B cell (primary cell): ENCODE measurements at regions of chr12 and their contacts with region 1.

Region 1: GRCh38 chr12:69359531-69360347 is at the start of gene YEATS4:
- DNase-seq: peak; percentile 93
- ATAC-seq: peak; percentile 83
- H3K4me3 ChIP-seq: peak within 1 kb of the TSS; percentile 61 to 99 (median 90)
- H3K4me3 Mint-ChIP-seq: peak within 1 kb of the TSS; percentile 88
- H3K27ac ChIP-seq: peak within 1 kb of the TSS; percentile 93 to 96
- H3K27ac Mint-ChIP-seq: peak within 1 kb of the TSS; percentile 95
- H3K4me1 ChIP-seq: peaks cover 10 to 21% of the 10 kb centered on the region in 2 donors
- H3K4me1 Mint-ChIP-seq: peaks cover 17% of the 10 kb centered on the region
- H3K27me3 ChIP-seq: no peaks in the 10 kb centered on the region
- H3K27me3 Mint-ChIP-seq: no peaks in the 10 kb centered on the region
- CTCF ChIP-seq: no peak
- total RNA-seq, gene YEATS4: 15.2 and 18.0 TPM in 2 replicates

Region 2: GRCh38 chr12:69239352-69239921 is 120.3 kb before region 1 on chr12 and contains the start of gene CPSF6:
- CTCF ChIA-PET with region 1: interaction called, 3 read pairs
- POLR2A ChIA-PET with region 1: no interaction called
- intact Hi-C with region 1: loop called (anchors 1 kb)
- DNase-seq: peak; percentile 97
- ATAC-seq: peak; percentile 94
- H3K4me3 ChIP-seq: peak within 1 kb of the TSS; percentile 63 to 91 (median 88)
- H3K4me3 Mint-ChIP-seq: peak within 1 kb of the TSS; percentile 93
- H3K27ac ChIP-seq: peak within 1 kb of the TSS; percentile 80 to 88
- H3K27ac Mint-ChIP-seq: peak within 1 kb of the TSS; percentile 98
- H3K4me1 ChIP-seq: peaks cover 33 to 39% of the 10 kb centered on the region in 2 donors
- H3K4me1 Mint-ChIP-seq: peaks cover 48% of the 10 kb centered on the region
- H3K27me3 ChIP-seq: no peaks in the 10 kb centered on the region
- H3K27me3 Mint-ChIP-seq: no peaks in the 10 kb centered on the region
- CTCF ChIP-seq: no peak
- total RNA-seq, gene CPSF6: 108 and 114 TPM in 2 replicates

Region 3: GRCh38 chr12:69330475-69331473 is 29.0 kb before region 1 on chr12:
- CTCF ChIA-PET with region 1: interaction called, 21 read pairs
- POLR2A ChIA-PET with region 1: interaction called, 14 read pairs
- intact Hi-C with region 1: loop called (anchors 2 kb)
- DNase-seq: peak; percentile 62
- ATAC-seq: peak; percentile 77
- H3K4me3 ChIP-seq: peak overlapping the region; percentile 46 to 74 (median 65)
- H3K4me3 Mint-ChIP-seq: peak overlapping the region; percentile 91
- H3K27ac ChIP-seq: peak overlapping the region; percentile 83 to 86
- H3K27ac Mint-ChIP-seq: peak overlapping the region; percentile 93
- H3K4me1 ChIP-seq: peaks cover 15 to 20% of the 10 kb centered on the region in 2 donors
- H3K4me1 Mint-ChIP-seq: peaks cover 23% of the 10 kb centered on the region
- H3K27me3 ChIP-seq: no peaks in the 10 kb centered on the region
- H3K27me3 Mint-ChIP-seq: no peaks in the 10 kb centered on the region
- CTCF ChIP-seq: no peak

Region 4: GRCh38 chr12:69348162-69348938 is 11.4 kb before region 1 on chr12 and contains the start of gene LYZ:
- CTCF ChIA-PET with region 1: interaction called, 31 read pairs
- POLR2A ChIA-PET with region 1: interaction called, 4 read pairs
- intact Hi-C with region 1: no loop called
- DNase-seq: peak; percentile 17
- ATAC-seq: no peak
- H3K4me3 ChIP-seq: peak within 1 kb of the TSS in 1 of 5 experiments; percentile 55
- H3K4me3 Mint-ChIP-seq: no peak within 1 kb of the TSS
- H3K27ac ChIP-seq: no peak within 1 kb of the TSS
- H3K27ac Mint-ChIP-seq: peak within 1 kb of the TSS; percentile 27
- H3K4me1 ChIP-seq: peaks cover 6 to 8% of the 10 kb centered on the region in 2 donors
- H3K4me1 Mint-ChIP-seq: peaks cover 6% of the 10 kb centered on the region
- H3K27me3 ChIP-seq: peaks cover 0 to 7% (median 0%) of the 10 kb centered on the region in 4 experiments
- H3K27me3 Mint-ChIP-seq: no peaks in the 10 kb centered on the region
- CTCF ChIP-seq: no peak
- total RNA-seq, gene LYZ: 5.5 and 8.5 TPM in 2 replicates

Region 5: DNA sequence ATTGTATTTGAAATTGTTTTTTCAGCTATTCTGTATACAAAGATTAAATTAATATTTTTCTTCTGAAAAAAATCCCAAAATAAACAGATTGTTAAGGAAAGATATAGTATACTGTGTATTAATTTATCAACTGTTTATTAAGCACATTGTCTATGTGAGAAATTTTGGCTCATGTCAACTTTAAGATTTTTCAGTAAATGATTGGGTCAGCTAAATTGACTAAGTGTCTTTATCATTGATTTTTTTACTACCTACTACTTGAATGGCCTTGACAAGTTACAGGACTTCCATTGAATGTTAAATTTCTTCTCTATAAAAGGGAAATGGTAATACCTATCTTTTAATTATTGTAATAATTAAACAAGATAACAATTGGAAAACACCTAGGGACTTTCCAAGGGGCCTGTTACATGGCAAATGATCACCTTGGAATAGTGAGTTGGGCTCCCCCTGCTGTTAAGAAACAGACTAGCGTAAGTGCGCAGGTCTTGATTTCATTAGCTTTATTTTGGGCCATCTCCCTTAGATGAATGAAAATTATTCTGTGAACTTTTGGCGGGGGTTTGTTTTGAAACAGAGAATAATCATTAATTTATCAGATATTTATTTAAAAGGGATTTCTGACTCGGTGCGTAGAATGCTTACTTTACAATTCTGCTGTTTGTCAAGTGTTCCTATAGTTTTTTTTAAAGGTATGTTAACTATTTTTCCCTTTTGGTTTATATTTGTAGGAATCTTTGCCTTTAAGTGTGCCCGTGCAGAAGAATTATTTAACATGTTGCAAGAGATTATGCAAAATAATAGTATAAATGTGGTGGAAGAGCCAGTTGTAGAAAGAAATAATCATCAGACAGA is 211.0 kb after region 1 on chr12:
- CTCF ChIA-PET with region 1: interaction called, 172 read pairs
- POLR2A ChIA-PET with region 1: interaction called, 6 read pairs
- intact Hi-C with region 1: loop called (anchors 1 kb)
- DNase-seq: peak; percentile 81
- ATAC-seq: peak; percentile 63
- H3K4me3 ChIP-seq: no peak overlapping the region
- H3K4me3 Mint-ChIP-seq: no peak overlapping the region
- H3K27ac ChIP-seq: peak overlapping the region in 1 of 2 donors; percentile 82
- H3K27ac Mint-ChIP-seq: no peak overlapping the region
- H3K4me1 ChIP-seq: no peaks in the 10 kb centered on the region
- H3K4me1 Mint-ChIP-seq: peaks cover 2% of the 10 kb centered on the region
- H3K27me3 ChIP-seq: no peaks in the 10 kb centered on the region
- H3K27me3 Mint-ChIP-seq: no peaks in the 10 kb centered on the region
- CTCF ChIP-seq: peak; percentile 94

Region 6: GRCh38 chr12:69639400-69640016 is 279.8 kb after region 1 on chr12:
- CTCF ChIA-PET with region 1: interaction called, 56 read pairs
- POLR2A ChIA-PET with region 1: no interaction called
- intact Hi-C with region 1: loop called (anchors 1 kb)
- DNase-seq: peak; percentile 69
- ATAC-seq: peak; percentile 67
- H3K4me3 ChIP-seq: no peak overlapping the region
- H3K4me3 Mint-ChIP-seq: no peak overlapping the region
- H3K27ac ChIP-seq: no peak overlapping the region
- H3K27ac Mint-ChIP-seq: no peak overlapping the region
- H3K4me1 ChIP-seq: no peaks in the 10 kb centered on the region
- H3K4me1 Mint-ChIP-seq: no peaks in the 10 kb centered on the region
- H3K27me3 ChIP-seq: no peaks in the 10 kb centered on the region
- H3K27me3 Mint-ChIP-seq: no peaks in the 10 kb centered on the region
- CTCF ChIP-seq: peak; percentile 91

Region 7: DNA sequence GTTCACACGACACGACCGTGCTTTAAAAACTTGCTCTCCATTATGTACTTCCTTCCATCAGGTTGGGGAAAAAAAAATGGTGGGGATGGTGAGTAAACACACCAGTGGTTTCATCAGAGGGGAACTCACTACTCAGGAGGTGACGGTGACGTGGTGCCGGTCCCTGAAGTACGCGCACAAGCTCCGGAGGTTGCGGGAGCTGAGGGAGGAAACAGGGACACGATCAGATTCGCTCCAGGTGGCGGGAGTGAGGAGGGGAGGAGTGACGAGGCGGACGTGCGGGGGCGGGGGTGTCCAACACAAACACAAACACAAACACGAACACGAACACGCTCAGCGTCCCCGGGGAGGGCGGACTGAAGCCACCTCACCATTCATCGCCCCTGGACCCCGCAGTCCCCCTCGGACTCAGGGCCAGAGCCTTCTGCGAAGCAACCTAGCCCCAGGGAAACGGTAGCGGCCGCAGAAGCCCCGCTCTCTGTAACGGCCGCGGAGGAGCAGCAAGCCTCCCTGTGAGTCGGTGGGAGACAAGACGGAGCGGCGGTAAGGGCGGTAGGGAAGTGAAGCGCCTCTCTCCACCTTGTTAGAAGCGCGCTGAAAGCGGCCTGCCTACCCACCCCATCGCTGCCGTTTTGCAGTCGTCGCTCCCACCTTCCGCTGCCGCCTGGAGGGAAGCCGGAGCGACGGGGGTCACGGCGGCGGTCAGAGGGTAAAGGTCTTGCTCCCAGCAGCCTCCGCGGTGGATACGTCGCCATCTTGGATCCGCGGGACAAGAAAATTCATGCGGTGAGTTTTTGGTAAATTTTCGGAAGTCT is 883.2 kb after region 1 on chr12 and contains the start of gene CNOT2:
- CTCF ChIA-PET with region 1: no interaction called
- POLR2A ChIA-PET with region 1: no interaction called
- intact Hi-C with region 1: loop called (anchors 5 kb)
- DNase-seq: peak; percentile 93
- ATAC-seq: peak; percentile 88
- H3K4me3 ChIP-seq: peak within 1 kb of the TSS; percentile 75 to 92 (median 85)
- H3K4me3 Mint-ChIP-seq: peak within 1 kb of the TSS; percentile 96
- H3K27ac ChIP-seq: peak within 1 kb of the TSS; percentile 95 to 98
- H3K27ac Mint-ChIP-seq: peak within 1 kb of the TSS; percentile 97
- H3K4me1 ChIP-seq: peaks cover 20 to 33% of the 10 kb centered on the region in 2 donors
- H3K4me1 Mint-ChIP-seq: peaks cover 57% of the 10 kb centered on the region
- H3K27me3 ChIP-seq: no peaks in the 10 kb centered on the region
- H3K27me3 Mint-ChIP-seq: no peaks in the 10 kb centered on the region
- CTCF ChIP-seq: no peak
- total RNA-seq, gene CNOT2: 115 and 120 TPM in 2 replicates